ENCODE measurements at regions of chr7 and their contacts with region 1.

Region 1: DNA sequence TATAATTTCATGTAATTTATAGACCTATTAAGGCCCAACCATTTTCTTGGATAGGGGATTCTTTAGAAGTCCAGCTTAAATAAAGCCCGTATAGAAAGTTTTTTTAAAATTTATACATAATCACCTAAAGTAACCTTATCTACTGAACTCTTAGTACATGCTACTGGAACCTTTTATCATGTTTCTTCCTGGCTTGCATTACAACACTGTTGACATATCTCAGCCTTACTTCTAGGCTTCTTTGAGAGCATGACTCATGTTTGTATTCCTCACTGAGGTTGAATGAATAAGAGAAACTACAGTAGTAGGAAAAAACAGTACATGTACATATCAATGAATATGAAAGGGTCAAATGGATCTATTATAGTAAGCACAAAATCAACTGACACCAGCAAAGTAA is 8.2 kb upstream of the MAGI2 start:
- DNase-seq: peak; percentile 86
- ATAC-seq: peak; percentile 98
- H3K4me3 ChIP-seq: peak overlapping the region; percentile 38; the same call in 1 of the 2 replicates
- H3K27ac ChIP-seq: peak overlapping the region; percentile 94
- H3K4me1 ChIP-seq: peaks cover 15% of the 10 kb centered on the region
- H3K27me3 ChIP-seq: no peaks in the 10 kb centered on the region
- CTCF ChIP-seq: no peak

Region 2: DNA sequence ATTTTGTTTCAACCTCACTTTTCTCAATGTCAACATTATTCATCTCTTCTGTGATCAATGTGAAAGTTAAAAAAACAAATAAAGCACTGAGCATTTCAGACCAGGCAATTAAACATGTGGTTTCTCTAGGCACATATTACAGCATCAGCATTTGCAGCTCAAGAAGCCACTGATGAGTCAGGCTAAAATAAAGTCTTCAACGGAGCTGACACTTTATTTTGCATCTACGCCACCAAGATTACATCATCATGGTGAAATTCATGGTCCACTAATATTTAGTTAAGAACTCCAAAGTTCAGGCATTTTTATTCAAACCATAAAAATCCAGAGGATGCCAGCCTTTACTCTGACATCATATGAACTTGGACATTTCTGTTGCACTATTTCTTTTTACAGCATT is 41.2 kb before region 1 on chr7:
- CTCF ChIA-PET with region 1: no interaction called
- POLR2A ChIA-PET with region 1: no interaction called
- intact Hi-C with region 1: loop called (anchors 5 kb)
- DNase-seq: peak; percentile 86
- ATAC-seq: peak; percentile 99
- H3K4me3 ChIP-seq: no peak overlapping the region
- H3K27ac ChIP-seq: peak overlapping the region; percentile 23; the same call in 1 of the 2 replicates
- H3K4me1 ChIP-seq: peaks cover 18% of the 10 kb centered on the region
- H3K27me3 ChIP-seq: no peaks in the 10 kb centered on the region
- CTCF ChIP-seq: no peak

Measured in PC-3 (cell line).